ENCODE measurements at regions of chr11 and their contacts with region 1.

Region 1: DNA sequence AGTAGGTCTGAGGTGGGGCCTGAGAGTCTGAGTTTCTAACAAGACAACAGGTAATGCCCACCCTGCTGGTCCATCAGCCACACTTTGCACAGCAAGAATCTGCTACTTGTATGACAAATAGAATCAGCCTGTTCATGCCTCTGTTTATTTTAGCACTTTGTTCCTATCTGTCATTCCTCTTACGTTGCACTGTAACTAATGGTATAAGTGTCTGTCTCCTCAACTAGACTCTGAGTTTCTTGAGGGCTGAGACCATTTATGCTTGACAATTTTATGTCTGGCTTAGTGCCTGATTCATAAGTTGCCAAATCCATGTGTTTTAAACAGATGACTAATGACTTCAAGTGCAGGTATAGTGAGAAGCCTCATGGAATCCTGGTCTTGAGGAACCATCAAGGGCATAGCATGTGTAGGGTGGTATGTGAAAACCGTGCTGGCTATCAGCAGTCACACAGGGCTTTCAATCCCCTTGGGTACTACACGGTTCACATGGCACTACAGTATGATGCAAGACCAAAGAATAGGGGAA is 209.7 kb downstream of the C11orf91 start:
- DNase-seq: peak; percentile 4
- ATAC-seq: no peak
- H3K4me3 ChIP-seq: no peak overlapping the region
- H3K27ac ChIP-seq: no peak overlapping the region
- H3K4me1 ChIP-seq: no peaks in the 10 kb centered on the region
- H3K27me3 ChIP-seq: no peaks in the 10 kb centered on the region
- CTCF ChIP-seq: no peak

Region 2: DNA sequence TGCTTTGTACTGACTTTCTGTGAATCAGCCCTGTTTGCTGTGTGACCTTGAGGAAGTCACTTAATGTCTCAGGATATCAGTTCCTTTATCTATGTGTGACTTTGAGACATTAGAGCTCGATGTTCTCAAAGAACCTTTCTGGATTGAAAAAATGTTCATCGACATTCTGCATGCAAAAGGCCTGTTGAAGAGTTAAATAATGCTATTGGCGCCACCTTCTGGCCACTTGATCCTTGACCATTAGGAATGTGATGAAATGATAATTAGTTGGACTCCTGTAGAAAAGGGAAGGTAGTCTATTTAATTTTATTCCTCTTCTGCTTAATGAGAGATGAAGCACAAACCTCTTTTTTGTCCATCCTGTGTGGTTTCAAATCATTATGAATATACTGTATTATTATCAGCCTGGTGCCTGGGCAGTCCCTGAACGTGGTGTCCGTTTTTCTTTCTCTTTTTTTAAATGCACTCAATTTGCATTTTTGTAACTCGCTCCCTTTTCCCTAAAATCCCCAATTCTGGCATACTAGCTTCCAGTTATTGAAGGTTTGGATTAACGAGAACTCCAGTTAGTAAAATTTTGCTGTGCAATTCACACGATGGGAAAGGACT is 1002.0 kb after region 1 on chr11:
- CTCF ChIA-PET with region 1: interaction called, 15 read pairs
- POLR2A ChIA-PET with region 1: no interaction called
- intact Hi-C with region 1: no loop called
- DNase-seq: peak; percentile 72
- ATAC-seq: 0 out of 2 replicates have a peak, but pooled peaks have one; percentile 44
- H3K4me3 ChIP-seq: no peak overlapping the region
- H3K27ac ChIP-seq: no peak overlapping the region
- H3K4me1 ChIP-seq: peaks cover 7% of the 10 kb centered on the region
- H3K27me3 ChIP-seq: no peaks in the 10 kb centered on the region
- CTCF ChIP-seq: peak; percentile 84